ENCODE measurements at regions of chr1 and their contacts with region 1.

Region 1: GRCh38 chr1:19596714-19597495 is 47.2 kb upstream of the NBL1 start:
- DNase-seq: peak; percentile 98
- ATAC-seq: peak; percentile 86
- H3K4me3 Mint-ChIP-seq: peak overlapping the region; percentile 100
- H3K27ac Mint-ChIP-seq: peak overlapping the region; percentile 99
- H3K4me1 Mint-ChIP-seq: peaks cover 44% of the 10 kb centered on the region
- H3K27me3 Mint-ChIP-seq: no peaks in the 10 kb centered on the region

Region 2: DNA sequence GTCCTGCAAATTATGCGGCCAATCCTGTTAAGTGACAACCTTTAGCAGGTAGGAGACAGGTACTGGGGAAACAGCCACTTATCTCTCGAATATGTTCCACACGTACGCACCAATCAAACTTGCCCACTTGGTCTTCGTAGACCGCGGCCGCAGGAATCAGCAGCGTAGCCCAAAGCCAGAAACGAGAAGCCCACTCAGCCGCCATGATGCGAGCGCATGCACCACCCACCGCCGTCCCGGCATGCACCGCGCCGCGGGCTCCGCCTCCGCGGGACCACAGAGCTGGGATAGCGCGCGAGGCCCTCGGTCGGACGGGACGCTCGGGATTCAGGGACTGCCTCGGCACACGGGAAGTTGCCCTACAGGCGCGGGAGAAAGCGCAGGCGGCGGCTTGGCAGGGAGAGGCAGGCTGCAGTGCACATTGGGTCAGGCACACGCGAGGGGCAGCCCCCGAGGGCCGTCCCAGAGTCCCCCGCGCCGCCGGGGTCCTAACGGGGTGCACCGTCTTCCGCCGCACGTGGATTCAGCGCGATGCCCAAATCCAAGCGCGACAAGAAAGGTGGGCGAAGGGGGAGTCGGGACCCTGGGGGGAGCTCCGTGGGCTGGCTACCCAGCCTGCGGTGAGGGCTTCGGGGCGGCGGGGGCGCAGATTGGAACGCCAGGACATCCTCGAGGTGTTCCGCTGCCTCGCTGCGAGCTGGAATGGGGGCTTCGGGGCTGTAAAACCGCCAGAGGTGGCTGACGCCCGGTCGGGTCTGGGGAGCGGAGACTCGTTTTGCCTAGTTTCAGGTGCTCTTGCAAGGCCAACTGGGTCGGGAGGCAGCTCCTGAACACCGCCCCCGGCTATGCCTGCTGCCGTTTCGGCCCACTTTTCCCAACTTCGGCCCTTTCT is 345.4 kb before region 1 on chr1 and contains the starts of genes EMC1 and MRTO4:
- CTCF ChIA-PET with region 1: no interaction called
- POLR2A ChIA-PET with region 1: interaction called, 4 read pairs
- intact Hi-C with region 1: loop called in 1 of 2 experiments (anchors 1 kb)
- DNase-seq: peak; percentile 94
- ATAC-seq: peak; percentile 87
- H3K4me3 Mint-ChIP-seq: peak within 1 kb of the TSS; percentile 99
- H3K27ac Mint-ChIP-seq: peak within 1 kb of the TSS; percentile 96
- H3K4me1 Mint-ChIP-seq: peaks cover 45% of the 10 kb centered on the region
- H3K27me3 Mint-ChIP-seq: no peaks in the 10 kb centered on the region
- total RNA-seq, gene EMC1: 45.0 to 59.0 TPM
- total RNA-seq, gene MRTO4: 82.6 to 95.0 TPM

Region 3: GRCh38 chr1:19341201-19342072 is 255.5 kb before region 1 on chr1:
- CTCF ChIA-PET with region 1: interaction called, 4 read pairs
- POLR2A ChIA-PET with region 1: no interaction called
- intact Hi-C with region 1: loop called in 1 of 2 experiments (anchors 5 kb)
- DNase-seq: peak; percentile 89
- ATAC-seq: peak; percentile 76
- H3K4me3 Mint-ChIP-seq: no peak overlapping the region
- H3K27ac Mint-ChIP-seq: no peak overlapping the region
- H3K4me1 Mint-ChIP-seq: peaks cover 23% of the 10 kb centered on the region
- H3K27me3 Mint-ChIP-seq: no peaks in the 10 kb centered on the region

Region 4: DNA sequence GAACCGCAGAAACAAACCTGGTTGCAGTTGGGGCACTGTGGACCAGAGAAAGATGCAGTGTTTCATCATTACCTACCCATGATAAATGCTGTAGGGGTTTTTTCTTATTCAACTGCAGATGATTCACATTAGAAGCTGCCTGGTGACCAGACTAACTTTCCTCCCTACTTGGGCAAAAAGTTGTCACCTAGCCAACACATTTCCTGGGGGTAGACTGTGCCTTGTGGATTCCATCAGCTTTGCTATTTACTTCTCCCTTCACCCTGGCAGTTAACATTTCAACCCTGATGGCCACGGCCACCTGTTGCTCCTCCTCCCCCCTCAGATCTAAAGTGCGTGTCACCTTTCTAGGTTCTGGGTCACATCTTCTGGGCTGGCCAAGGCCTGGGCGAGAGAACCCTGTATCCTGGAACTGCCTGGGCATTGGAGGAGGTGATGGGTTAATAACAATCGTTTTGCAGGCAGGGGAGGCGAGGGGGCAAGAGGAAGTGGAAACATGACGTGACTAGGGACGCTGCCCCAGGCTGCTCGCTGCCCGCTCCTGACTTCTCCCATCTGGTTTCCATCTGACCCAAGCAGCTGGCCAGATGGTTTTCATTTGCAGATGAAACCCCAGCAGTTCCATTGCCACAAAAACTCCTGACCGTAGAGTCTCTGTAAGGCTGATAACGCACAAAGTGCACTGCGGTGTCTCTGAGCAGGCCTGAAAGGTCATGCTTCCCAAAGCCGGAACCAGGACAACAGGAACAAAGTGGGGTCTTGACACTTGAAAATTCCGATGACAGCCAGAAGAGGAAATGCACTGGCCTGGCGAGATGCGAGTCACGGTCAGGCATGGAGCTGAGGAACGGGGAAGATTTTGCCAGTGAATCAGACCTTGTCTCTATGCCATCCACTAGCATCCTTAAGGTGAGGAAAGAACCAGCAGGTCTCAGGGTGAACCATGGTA is 148.1 kb before region 1 on chr1:
- CTCF ChIA-PET with region 1: no interaction called
- POLR2A ChIA-PET with region 1: no interaction called
- intact Hi-C with region 1: loop called in 1 of 2 experiments (anchors 5 kb)
- DNase-seq: peak; percentile 65
- ATAC-seq: peak; percentile 77
- H3K4me3 Mint-ChIP-seq: peak overlapping the region; percentile 6
- H3K27ac Mint-ChIP-seq: peak overlapping the region; percentile 92
- H3K4me1 Mint-ChIP-seq: peaks cover 91% of the 10 kb centered on the region
- H3K27me3 Mint-ChIP-seq: no peaks in the 10 kb centered on the region

Region 5: DNA sequence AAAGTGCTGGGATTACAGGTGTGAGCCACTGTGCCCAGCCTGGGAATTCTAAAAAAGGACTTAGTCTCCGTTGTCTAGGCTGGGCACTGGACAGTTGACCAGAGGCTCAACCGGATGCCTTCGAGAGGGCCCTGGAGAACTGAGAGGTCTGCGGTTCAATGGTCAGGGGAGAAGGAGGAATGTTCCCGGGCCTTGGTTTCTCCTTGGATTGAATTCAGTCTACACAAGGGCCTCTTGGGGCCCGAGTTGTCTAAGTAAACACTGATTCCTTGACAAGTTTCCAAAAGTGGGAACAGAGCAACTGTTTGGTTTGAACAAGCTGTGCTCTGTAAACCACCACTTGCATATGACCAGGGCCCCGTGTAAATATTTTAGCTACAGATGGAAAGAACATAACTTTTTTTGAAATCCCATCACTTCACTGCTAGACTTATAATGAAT is 82.5 kb before region 1 on chr1:
- CTCF ChIA-PET with region 1: no interaction called
- POLR2A ChIA-PET with region 1: no interaction called
- intact Hi-C with region 1: no loop called
- DNase-seq: no peak
- ATAC-seq: no peak
- H3K4me3 Mint-ChIP-seq: no peak overlapping the region
- H3K27ac Mint-ChIP-seq: no peak overlapping the region
- H3K4me1 Mint-ChIP-seq: peaks cover 8% of the 10 kb centered on the region
- H3K27me3 Mint-ChIP-seq: no peaks in the 10 kb centered on the region

Region 6: GRCh38 chr1:19606817-19607642 is 10.1 kb after region 1 on chr1:
- CTCF ChIA-PET with region 1: no interaction called
- POLR2A ChIA-PET with region 1: interaction called, 11 read pairs
- intact Hi-C with region 1: no loop called
- DNase-seq: peak; percentile 70
- ATAC-seq: peak; percentile 61
- H3K4me3 Mint-ChIP-seq: no peak overlapping the region
- H3K27ac Mint-ChIP-seq: peak overlapping the region; percentile 72
- H3K4me1 Mint-ChIP-seq: peaks cover 58% of the 10 kb centered on the region
- H3K27me3 Mint-ChIP-seq: no peaks in the 10 kb centered on the region

Region 7: DNA sequence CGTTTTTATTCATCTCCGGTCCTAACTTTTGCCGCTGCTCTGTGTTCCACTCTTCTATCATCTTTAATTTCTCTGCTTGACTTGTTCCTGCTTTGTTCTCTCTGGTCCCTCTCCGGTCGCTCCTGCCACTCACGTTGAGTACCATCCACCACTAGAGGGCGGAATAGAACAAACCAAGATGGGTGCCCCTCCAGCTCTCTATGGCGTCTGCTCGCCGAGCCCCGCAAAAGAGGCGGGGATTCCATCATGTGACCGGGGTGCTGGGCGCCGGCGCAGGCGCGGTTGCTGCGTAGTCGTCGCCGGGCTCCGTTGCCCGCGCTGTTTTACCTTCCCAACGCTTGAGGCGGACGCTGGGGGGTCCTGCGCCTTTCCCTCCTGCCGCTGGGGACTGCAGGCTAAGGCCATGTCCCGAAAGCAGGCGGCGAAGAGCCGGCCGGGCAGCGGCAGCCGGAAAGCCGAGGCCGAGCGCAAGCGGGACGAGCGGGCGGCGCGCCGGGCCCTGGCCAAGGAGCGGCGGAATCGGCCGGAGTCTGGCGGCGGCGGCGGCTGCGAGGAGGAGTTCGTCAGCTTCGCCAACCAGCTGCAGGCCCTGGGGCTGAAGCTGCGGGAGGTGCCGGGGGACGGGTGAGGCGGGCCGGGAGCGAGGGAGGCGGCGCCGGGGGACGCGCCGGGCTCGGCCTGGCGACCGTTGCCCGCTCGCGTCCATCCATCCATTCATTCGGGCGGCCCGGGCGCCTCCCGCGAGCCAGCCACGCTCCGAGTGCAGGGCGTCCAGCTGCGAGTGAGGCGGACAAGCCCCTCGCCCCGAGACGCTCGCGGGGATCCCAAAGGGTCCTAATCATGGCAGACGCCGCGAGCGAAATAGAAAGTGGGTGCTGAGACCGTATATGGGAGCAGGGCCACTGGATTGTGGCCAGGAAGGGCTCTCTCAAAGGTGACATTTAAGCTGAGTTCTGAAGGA is 285.5 kb after region 1 on chr1 and contains the start of gene OTUD3:
- CTCF ChIA-PET with region 1: no interaction called
- POLR2A ChIA-PET with region 1: interaction called, 3 read pairs
- intact Hi-C with region 1: loop called in 1 of 2 experiments (anchors 1 kb)
- DNase-seq: peak; percentile 96
- ATAC-seq: peak; percentile 98
- H3K4me3 Mint-ChIP-seq: peak within 1 kb of the TSS; percentile 79
- H3K27ac Mint-ChIP-seq: peak within 1 kb of the TSS; percentile 76
- H3K4me1 Mint-ChIP-seq: peaks cover 36% of the 10 kb centered on the region
- H3K27me3 Mint-ChIP-seq: peaks cover 4% of the 10 kb centered on the region
- total RNA-seq, gene OTUD3: 6.6 to 9.2 TPM

Measured in activated CD4-positive, alpha-beta T cell treated with anti-CD3 and anti-CD28 coated beads for 36 hours (primary cell).